H1 (cell line): ENCODE measurements at regions of chr7 and their contacts with region 1.

Region 1: DNA sequence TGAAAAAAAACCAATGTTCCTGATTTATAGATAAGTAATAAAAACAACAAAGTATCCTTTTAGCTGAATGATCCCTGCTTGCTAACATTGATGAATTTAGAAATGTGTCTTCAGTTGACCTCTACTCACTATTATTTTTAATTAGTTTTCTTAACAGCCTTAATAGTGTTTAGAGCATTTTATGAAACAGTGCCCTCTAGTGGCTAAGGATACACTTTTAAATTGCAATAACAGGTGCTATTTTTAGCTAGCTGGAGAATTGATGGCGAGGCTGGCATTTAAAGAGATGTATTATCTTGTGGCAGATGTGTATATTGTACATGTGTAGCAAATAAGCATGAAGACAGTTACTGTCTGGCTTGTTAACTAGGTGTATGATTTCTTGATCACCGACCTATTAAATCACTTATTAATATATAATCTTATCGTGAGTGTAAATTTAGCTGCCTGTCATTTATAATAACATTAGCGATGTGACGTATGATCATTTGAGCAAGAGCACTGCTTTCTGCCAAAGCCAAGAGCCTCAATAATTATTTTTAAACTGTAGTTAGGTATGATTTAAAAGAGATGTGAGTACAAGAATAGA is 451.9 kb downstream of the DPP6 start:
- DNase-seq: no peak
- H3K4me3 ChIP-seq: no peak overlapping the region
- H3K27ac ChIP-seq: no peak overlapping the region
- H3K4me1 ChIP-seq: no peaks in the 10 kb centered on the region
- H3K27me3 ChIP-seq: no peaks in the 10 kb centered on the region
- CTCF ChIP-seq: peak in 2 of 3 experiments; percentile 38 to 51; a peak in 2 of 4 replicates
- EP300 ChIP-seq: no peak
- POLR2A ChIP-seq: no peak
- RAD21 ChIP-seq: peak; percentile 60 to 64

Region 2: DNA sequence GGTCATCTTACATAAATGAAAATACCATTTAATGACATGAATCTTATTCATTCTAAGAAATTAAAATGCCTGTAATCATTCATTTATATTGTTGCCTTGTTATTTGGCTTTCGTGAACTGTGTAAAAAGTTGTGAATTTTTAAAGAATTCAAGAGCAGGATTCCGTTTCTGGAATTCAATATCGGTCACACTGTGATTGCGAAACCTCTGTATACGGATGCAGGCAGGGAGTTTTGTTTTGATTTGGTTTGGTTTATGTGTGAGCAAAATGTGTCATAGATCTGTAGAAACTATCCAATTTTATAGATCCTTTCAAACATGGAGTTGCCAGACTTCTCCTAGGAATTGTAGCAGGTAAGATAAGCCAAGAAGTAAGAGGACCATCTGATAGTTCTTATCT is 10.5 kb before region 1 on chr7:
- CTCF ChIA-PET with region 1: interaction called, 17 read pairs
- POLR2A ChIA-PET with region 1: no interaction called
- DNase-seq: no peak
- H3K4me3 ChIP-seq: no peak overlapping the region
- H3K27ac ChIP-seq: no peak overlapping the region
- H3K4me1 ChIP-seq: no peaks in the 10 kb centered on the region
- H3K27me3 ChIP-seq: no peaks in the 10 kb centered on the region
- CTCF ChIP-seq: no peak
- EP300 ChIP-seq: no peak
- POLR2A ChIP-seq: no peak
- RAD21 ChIP-seq: no peak

Region 3: DNA sequence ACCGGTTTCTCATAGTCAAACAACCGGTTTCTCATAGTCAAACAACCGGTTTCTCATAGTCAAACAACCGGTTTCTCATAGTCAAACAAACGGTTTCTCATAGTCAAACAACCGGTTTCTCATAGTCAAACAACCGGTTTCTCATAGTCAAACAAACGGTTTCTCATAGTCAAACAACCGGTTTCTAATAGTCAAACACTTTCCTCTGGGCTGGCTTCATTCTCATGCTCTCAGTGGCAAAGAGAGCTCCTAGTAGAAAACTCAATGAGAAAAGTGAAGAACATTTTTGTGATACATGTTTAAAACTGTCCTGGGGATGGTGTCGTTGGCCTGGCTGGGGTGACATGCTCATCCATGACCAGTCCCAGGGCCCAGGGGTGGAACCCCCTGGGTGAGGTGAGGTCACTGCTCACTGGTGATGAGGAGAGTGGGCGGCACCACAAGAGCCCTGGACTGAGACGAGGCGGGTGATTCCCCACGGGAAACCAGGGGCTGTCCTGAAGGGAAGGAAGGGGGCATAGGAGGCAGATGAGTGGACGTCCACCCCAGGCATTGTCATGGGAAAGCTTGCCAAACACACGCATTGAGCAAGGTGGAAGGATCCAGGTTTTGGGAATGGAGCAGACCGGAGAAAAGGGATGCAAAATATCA is 620.5 kb after region 1 on chr7:
- CTCF ChIA-PET with region 1: no interaction called
- POLR2A ChIA-PET with region 1: no interaction called
- DNase-seq: no peak
- H3K4me3 ChIP-seq: no peak overlapping the region
- H3K27ac ChIP-seq: no peak overlapping the region
- H3K4me1 ChIP-seq: peaks cover 0 to 3% (median 0%) of the 10 kb centered on the region in 4 experiments; a peak in 1 of 7 replicates
- H3K27me3 ChIP-seq: no peaks in the 10 kb centered on the region
- CTCF ChIP-seq: no peak
- EP300 ChIP-seq: no peak
- POLR2A ChIP-seq: no peak
- RAD21 ChIP-seq: no peak